ENCODE measurements at regions of chr12 and their contacts with region 1.

Region 1: GRCh38 chr12:12319451-12320183 is 30.4 kb downstream of the MANSC1 start:
- DNase-seq: peak; percentile 29

Region 2: GRCh38 chr12:12305568-12306300 is 13.9 kb before region 1 on chr12:
- CTCF ChIA-PET with region 1: no interaction called
- POLR2A ChIA-PET with region 1: no interaction called
- DNase-seq: no peak

Region 3: GRCh38 chr12:12356886-12357718 is 37.5 kb after region 1 on chr12 and contains the start of gene BORCS5:
- CTCF ChIA-PET with region 1: no interaction called
- POLR2A ChIA-PET with region 1: interaction called, 10 read pairs
- DNase-seq: peak; percentile 92

Region 4: DNA sequence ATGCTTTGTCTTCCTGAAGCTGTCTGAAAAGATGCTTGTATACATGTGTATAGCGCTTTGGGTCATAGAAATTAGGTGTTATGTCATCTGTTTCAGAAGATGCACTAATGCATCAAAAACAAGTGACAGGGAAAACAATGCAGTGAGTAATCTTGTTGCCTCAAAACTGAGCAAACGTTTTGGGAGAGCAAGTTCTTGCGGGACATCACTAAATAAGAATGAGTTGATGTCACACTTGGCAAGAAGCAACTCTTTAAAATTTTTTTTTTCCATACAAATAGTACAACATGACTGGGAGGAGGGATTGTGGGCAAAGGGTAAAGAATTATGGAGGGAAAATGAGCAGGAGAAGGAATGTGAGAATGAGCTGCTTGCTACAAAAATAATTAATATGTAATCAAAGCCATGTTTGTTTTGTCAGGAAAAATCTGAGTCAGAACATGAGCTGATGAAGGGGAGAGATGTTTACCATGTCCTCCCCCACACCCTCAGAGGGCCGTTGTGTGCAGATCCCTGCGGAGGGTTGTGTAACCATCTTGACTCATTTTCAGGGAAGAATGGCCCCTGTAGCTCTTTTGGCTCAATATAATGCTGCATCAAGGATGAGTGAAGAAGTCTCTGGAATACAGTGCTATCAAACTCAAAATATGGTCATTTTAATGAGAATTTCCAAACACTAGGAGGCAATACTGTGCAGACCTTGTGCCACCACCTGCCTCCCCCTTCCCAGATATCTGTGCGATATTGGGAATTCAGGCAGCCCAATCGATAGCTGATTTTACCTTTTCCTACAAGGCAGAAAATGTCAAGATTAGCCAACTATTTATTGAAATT is 78.6 kb after region 1 on chr12:
- CTCF ChIA-PET with region 1: no interaction called
- POLR2A ChIA-PET with region 1: no interaction called
- DNase-seq: no peak